AG04450 (cell line): ENCODE measurements at regions of chr3 and their contacts with region 1.

Region 1: DNA sequence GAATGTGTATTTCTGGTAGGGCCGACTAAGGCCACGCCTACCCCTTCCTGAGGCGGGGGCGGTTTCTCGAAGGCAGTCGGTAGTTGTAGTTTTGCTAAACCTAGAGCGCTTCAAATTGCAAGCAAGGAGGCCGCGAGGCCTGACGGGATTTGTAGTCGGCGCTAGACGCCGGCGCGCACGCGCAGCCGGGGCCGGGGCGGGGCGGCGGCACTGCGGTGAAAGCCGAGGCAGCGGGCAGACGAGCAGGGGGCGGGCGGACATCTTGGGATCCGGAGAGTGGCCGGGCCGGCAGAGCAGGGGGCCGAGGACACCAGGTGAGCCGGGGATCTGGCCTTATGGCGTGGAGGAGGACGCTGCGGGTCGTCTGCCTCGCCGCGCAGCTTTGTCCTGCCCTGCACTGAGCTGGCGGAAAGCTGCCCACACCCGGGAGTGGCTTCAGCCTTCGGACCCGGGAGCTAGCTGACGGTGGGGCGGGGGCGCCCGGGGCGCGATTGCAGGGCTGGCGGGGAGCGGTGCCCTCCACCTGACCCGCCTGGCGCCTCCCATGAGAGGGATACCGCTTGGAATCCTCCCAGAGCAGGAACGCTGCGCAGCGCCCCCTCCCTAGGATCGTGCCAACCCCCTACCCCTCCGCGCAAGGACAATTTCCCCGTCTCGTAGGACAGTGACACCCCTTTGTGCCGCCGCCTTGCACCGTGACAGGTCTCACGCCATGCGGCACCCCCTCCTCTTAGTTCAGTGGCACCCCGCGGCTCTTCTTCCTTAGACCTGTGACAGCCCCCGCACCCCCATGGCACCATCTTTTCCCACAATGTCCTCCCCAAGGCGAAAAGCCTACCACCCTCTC is at the start of gene AP2M1:
- DNase-seq: peak; percentile 99
- H3K4me3 ChIP-seq: peak within 1 kb of the TSS; percentile 98
- H3K27ac ChIP-seq: peak within 1 kb of the TSS; percentile 73
- H3K27me3 ChIP-seq: no peaks in the 10 kb centered on the region
- CTCF ChIP-seq: no peak
- polyA plus RNA-seq, gene AP2M1: 963 and 1,068 TPM in 2 replicates

Region 2: GRCh38 chr3:184135149-184135910 is 39.5 kb before region 1 on chr3 and contains the start of gene EIF2B5:
- CTCF ChIA-PET with region 1: no interaction called
- POLR2A ChIA-PET with region 1: interaction called, 22 read pairs
- DNase-seq: peak; percentile 72
- H3K4me3 ChIP-seq: peak within 1 kb of the TSS; percentile 98
- H3K27ac ChIP-seq: peak within 1 kb of the TSS; percentile 57
- H3K27me3 ChIP-seq: no peaks in the 10 kb centered on the region
- CTCF ChIP-seq: peak; percentile 46
- polyA plus RNA-seq, gene EIF2B5: 28.8 and 29.8 TPM in 2 replicates

Region 3: DNA sequence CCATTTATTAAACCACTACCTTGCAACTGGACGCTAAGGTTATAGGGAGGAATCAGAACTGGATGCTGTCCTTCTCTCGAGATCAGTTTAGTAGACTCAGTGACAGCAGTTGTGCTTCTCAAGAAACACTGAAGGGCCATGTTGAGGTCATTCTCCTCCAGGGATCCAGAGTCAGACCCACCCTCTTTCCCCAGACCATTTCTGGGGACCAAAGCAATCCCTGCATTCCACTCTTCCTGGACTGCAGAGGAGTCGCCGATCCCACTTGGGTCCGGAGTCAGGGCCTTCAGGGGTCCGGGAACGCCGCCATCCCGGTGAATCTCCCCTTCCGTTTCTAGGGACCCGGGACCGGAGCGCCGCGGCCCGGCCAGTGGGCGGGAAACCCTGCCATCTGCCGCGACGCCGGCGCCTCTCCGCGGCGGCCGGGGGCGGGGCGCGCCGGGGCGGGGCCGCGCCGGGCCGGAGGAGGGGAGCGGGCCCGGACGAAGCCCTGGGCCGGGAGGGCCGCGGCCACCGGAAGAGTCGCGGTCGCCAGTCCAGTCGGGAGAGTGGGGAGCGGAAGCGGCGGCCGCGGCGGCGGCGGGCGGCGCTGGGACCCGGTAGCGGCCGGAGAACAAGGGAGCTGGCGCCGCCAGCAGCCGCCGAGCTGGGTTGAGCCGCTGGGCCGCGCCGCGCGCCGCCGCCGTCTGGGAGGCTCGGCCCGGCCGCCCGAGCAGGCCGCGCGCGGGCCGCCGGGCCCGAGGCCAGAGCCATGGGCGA is 19.8 kb before region 1 on chr3 and contains the start of gene DVL3:
- CTCF ChIA-PET with region 1: interaction called, 4 read pairs
- POLR2A ChIA-PET with region 1: interaction called, 17 read pairs
- DNase-seq: no peak
- H3K4me3 ChIP-seq: peak within 1 kb of the TSS; percentile 97
- H3K27ac ChIP-seq: peak within 1 kb of the TSS; percentile 68
- H3K27me3 ChIP-seq: no peaks in the 10 kb centered on the region
- CTCF ChIP-seq: no peak
- polyA plus RNA-seq, gene DVL3: 29.7 and 37.8 TPM in 2 replicates

Region 4: DNA sequence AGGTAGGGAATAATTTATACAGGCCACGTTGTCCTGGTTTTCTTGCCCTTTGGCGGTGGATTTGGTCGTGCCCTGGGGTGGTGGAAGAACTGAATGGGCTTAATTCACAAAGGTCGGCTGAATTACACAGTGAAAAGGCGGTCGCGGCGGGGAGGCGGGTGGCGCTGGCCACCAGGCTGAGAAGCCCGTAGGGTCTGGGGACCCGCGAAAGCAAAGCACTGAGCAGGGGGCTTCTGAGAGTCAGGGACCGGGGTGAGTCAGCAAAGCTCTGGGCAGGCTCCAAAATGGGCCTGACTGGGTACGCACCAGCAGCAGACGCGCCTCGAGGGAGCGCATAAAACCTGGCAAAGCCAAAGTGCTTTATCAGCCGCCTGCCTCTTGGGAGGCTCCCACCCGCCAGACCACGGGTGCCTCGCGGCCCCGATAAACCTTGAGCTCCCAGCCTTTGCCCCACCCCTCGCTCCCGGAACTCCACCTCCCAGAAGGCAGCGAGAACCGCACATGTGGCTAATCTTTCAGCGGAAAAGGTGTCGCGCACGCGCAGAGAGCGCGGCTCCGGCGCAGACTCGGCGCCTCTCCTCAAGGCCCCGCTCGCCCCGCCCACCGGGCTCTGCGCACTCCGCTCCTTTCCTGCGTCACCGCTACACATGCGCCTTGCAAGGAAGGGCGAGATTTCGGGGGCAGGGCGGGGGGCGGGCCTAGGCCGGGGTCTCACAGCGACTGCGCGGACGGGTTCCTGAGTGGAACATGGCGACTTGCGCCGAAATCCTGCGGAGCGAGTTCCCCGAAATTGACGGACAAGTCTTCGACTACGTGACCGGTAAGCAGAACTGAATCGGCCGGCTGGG is 10.8 kb after region 1 on chr3 and contains the start of gene ABCF3:
- CTCF ChIA-PET with region 1: no interaction called
- POLR2A ChIA-PET with region 1: interaction called, 28 read pairs
- DNase-seq: peak; percentile 98
- H3K4me3 ChIP-seq: peak within 1 kb of the TSS; percentile 100
- H3K27ac ChIP-seq: peak within 1 kb of the TSS; percentile 79
- H3K27me3 ChIP-seq: no peaks in the 10 kb centered on the region
- CTCF ChIP-seq: no peak
- polyA plus RNA-seq, gene ABCF3: 43.1 and 50.0 TPM in 2 replicates